Psoas muscle (tissue), 8 donors: ENCODE measurements at regions of chr10 and their contacts with region 1.

Region 1: GRCh38 chr10:53140500-53140899 is 367.9 kb upstream of the MBL2 start:
- DNase-seq: no peak
- ATAC-seq: no peak
- H3K4me3 ChIP-seq: no peak overlapping the region
- H3K27ac ChIP-seq: no peak overlapping the region
- H3K4me1 ChIP-seq: no peaks in the 10 kb centered on the region
- H3K27me3 ChIP-seq: no peaks in the 10 kb centered on the region
- CTCF ChIP-seq: no peak

Region 2: GRCh38 chr10:53045315-53045714 is 95.2 kb before region 1 on chr10:
- intact Hi-C with region 1: no loop called
- DNase-seq: no peak
- ATAC-seq: no peak
- H3K4me3 ChIP-seq: no peak overlapping the region
- H3K27ac ChIP-seq: no peak overlapping the region
- H3K4me1 ChIP-seq: no peaks in the 10 kb centered on the region
- H3K27me3 ChIP-seq: no peaks in the 10 kb centered on the region
- CTCF ChIP-seq: no peak

Region 3: GRCh38 chr10:53102424-53102823 is 38.1 kb before region 1 on chr10:
- intact Hi-C with region 1: loop called in 1 of 2 experiments (anchors 2 kb)
- DNase-seq: no peak
- ATAC-seq: no peak
- H3K4me3 ChIP-seq: no peak overlapping the region
- H3K27ac ChIP-seq: no peak overlapping the region
- H3K4me1 ChIP-seq: no peaks in the 10 kb centered on the region
- H3K27me3 ChIP-seq: no peaks in the 10 kb centered on the region
- CTCF ChIP-seq: no peak

Region 4: GRCh38 chr10:53458007-53458406 is 317.5 kb after region 1 on chr10:
- intact Hi-C with region 1: no loop called
- DNase-seq: no peak
- ATAC-seq: no peak
- H3K4me3 ChIP-seq: no peak overlapping the region
- H3K27ac ChIP-seq: no peak overlapping the region
- H3K4me1 ChIP-seq: no peaks in the 10 kb centered on the region
- H3K27me3 ChIP-seq: no peaks in the 10 kb centered on the region
- CTCF ChIP-seq: no peak

Region 5: DNA sequence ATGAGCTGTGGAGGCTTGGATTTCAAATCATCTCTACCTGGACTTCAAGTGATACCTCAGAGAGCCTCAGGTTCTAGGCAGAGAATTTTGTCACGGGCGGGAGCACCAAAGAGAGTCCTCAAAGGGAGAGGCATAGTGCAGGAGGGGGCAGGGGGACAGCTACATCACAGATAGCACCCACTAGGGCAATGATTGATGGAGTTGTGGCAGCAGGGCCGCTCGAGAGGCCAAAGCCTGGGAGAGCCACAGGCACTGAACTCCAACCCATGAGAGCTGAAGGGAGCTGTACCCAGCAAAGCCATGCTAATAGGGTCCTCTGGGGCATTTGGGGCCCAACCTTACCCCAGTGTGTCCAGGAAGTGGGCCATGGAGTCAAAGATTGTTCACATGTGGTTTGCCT is 1892.6 kb after region 1 on chr10:
- intact Hi-C with region 1: loop called in 1 of 2 experiments (anchors 5 kb)
- DNase-seq: no peak
- ATAC-seq: no peak
- H3K4me3 ChIP-seq: no peak overlapping the region
- H3K27ac ChIP-seq: no peak overlapping the region
- H3K4me1 ChIP-seq: no peaks in the 10 kb centered on the region
- H3K27me3 ChIP-seq: no peaks in the 10 kb centered on the region
- CTCF ChIP-seq: no peak